CD4-positive, alpha-beta T cell (primary cell): ENCODE measurements at regions of chr12 and their contacts with region 1.

Region 1: DNA sequence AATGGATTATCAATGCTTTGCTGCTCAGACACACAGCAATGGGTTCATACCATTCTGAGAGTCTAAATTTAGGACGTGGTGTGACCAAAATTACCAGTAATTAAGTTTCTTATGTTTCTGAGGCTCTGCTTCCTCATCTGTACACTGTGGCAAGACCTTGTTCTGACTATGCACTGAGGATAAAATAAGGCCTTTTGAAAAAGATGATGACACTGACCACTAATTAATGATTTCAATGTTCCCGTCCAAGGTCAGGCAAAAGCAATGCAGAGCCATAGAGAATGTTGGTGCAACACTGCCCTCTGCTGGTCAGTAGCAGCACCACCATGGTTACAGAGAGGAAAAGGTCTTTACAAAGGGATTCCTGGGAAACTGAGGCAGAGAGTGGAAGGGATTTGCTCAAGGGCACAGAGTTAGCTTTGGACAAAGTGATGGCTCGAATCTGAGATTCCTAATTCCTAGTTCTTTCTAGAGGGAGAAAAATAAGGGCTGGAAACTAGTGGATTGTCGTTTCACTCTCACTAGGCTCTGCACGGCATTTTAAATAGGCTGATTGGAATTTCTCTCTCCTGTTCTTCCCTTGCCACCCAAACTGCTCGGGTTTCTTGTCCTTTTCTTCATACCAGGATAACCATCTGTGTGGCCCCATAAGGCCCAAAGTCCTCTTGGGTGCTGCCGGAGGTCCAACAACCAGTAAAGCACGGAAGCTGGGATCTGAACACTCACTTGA is 22.3 kb upstream of the P2RX7 start:
- DNase-seq: peak; percentile 33 to 87 (median 58)
- ATAC-seq: peak; percentile 82
- H3K4me3 ChIP-seq: no peak overlapping the region
- H3K4me3 Mint-ChIP-seq: no peak overlapping the region
- H3K27ac ChIP-seq: no peak overlapping the region
- H3K27ac Mint-ChIP-seq: no peak overlapping the region
- H3K4me1 ChIP-seq: no peaks in the 10 kb centered on the region
- H3K4me1 Mint-ChIP-seq: no peaks in the 10 kb centered on the region
- H3K27me3 ChIP-seq: no peaks in the 10 kb centered on the region
- H3K27me3 Mint-ChIP-seq: no peaks in the 10 kb centered on the region
- CTCF ChIP-seq: peak; percentile 99

Region 2: DNA sequence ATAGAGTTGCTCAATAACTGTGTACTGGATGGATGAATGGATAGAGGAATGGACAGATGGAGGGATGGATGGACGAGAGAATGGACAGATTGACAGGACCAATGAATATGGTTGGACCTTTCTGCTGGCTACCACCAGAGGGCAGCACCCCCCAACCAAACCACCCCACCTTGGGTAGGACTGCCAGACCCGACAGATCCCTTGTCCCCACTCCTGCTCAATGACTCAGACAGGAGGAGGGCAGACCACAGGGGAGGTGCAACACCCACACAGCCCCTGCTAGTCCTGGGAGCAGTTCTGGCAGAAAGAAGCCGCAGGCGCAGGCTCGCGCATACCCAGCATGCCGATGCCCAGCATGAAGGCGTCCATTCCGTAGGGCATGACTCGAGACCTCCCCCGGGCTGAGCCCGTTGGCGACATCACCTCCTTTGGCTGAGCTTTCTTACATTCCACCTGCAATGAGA is 753.8 kb before region 1 on chr12:
- CTCF ChIA-PET with region 1: no interaction called
- POLR2A ChIA-PET with region 1: no interaction called
- intact Hi-C with region 1: loop called in 1 of 2 experiments (anchors 5 kb)
- DNase-seq: peak; percentile 56 to 81 (median 65)
- ATAC-seq: peak; percentile 88
- H3K4me3 ChIP-seq: no peak overlapping the region
- H3K4me3 Mint-ChIP-seq: no peak overlapping the region
- H3K27ac ChIP-seq: no peak overlapping the region
- H3K27ac Mint-ChIP-seq: no peak overlapping the region
- H3K4me1 ChIP-seq: peaks cover 5% of the 10 kb centered on the region
- H3K4me1 Mint-ChIP-seq: no peaks in the 10 kb centered on the region
- H3K27me3 ChIP-seq: peaks cover 18 to 28% of the 10 kb centered on the region in 2 experiments
- H3K27me3 Mint-ChIP-seq: peaks cover 54% of the 10 kb centered on the region
- CTCF ChIP-seq: peak; percentile 91

Region 3: GRCh38 chr12:120761519-120761934 is 348.8 kb before region 1 on chr12:
- CTCF ChIA-PET with region 1: no interaction called
- POLR2A ChIA-PET with region 1: no interaction called
- intact Hi-C with region 1: loop called in 1 of 2 experiments (anchors 10 kb)
- DNase-seq: no peak
- ATAC-seq: peak; percentile 33
- H3K4me3 ChIP-seq: no peak overlapping the region
- H3K4me3 Mint-ChIP-seq: no peak overlapping the region
- H3K27ac ChIP-seq: peak overlapping the region; percentile 4 to 47
- H3K27ac Mint-ChIP-seq: peak overlapping the region; percentile 92
- H3K4me1 ChIP-seq: peaks cover 25% of the 10 kb centered on the region
- H3K4me1 Mint-ChIP-seq: peaks cover 31% of the 10 kb centered on the region
- H3K27me3 ChIP-seq: no peaks in the 10 kb centered on the region
- H3K27me3 Mint-ChIP-seq: no peaks in the 10 kb centered on the region
- CTCF ChIP-seq: no peak

Region 4: GRCh38 chr12:120944645-120945231 is 165.6 kb before region 1 on chr12:
- CTCF ChIA-PET with region 1: interaction called, 3 read pairs
- POLR2A ChIA-PET with region 1: no interaction called
- intact Hi-C with region 1: loop called (anchors 1 to 2 kb)
- DNase-seq: peak; percentile 32 to 80 (median 58)
- ATAC-seq: peak; percentile 71
- H3K4me3 ChIP-seq: no peak overlapping the region
- H3K4me3 Mint-ChIP-seq: no peak overlapping the region
- H3K27ac ChIP-seq: no peak overlapping the region
- H3K27ac Mint-ChIP-seq: no peak overlapping the region
- H3K4me1 ChIP-seq: no peaks in the 10 kb centered on the region
- H3K4me1 Mint-ChIP-seq: peaks cover 5% of the 10 kb centered on the region
- H3K27me3 ChIP-seq: no peaks in the 10 kb centered on the region
- H3K27me3 Mint-ChIP-seq: peaks cover under 1% of the 10 kb centered on the region
- CTCF ChIP-seq: peak; percentile 68

Region 5: DNA sequence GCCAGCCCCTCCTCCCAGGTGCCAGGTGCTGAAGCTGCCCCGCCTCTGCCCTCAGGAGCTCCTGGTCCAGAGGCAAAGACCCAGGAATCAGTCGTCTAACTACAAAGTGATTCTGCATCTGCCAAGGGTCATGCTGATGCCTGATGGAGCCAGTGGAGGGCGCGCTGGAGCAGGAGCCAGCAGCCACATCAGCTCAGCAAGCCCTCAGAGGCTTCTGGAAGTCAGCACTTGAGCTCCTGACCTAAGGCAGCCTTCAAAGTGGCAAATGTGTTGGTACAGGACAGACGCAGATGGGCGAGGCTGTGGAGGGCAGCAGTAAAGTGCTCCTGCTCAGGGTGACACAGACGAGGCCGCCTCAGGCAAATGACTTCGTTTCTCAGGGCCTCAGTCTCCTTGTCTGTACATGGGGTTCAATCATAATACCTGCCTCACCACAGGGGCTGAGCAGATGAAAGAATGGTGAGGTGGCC is 105.0 kb before region 1 on chr12:
- CTCF ChIA-PET with region 1: no interaction called
- POLR2A ChIA-PET with region 1: no interaction called
- intact Hi-C with region 1: loop called in 1 of 2 experiments (anchors 5 kb)
- DNase-seq: peak in 12 of 14 experiments; percentile 12 to 64 (median 32)
- ATAC-seq: peak; percentile 66
- H3K4me3 ChIP-seq: no peak overlapping the region
- H3K4me3 Mint-ChIP-seq: no peak overlapping the region
- H3K27ac ChIP-seq: no peak overlapping the region
- H3K27ac Mint-ChIP-seq: no peak overlapping the region
- H3K4me1 ChIP-seq: no peaks in the 10 kb centered on the region
- H3K4me1 Mint-ChIP-seq: no peaks in the 10 kb centered on the region
- H3K27me3 ChIP-seq: no peaks in the 10 kb centered on the region
- H3K27me3 Mint-ChIP-seq: no peaks in the 10 kb centered on the region
- CTCF ChIP-seq: peak; percentile 27

Region 6: DNA sequence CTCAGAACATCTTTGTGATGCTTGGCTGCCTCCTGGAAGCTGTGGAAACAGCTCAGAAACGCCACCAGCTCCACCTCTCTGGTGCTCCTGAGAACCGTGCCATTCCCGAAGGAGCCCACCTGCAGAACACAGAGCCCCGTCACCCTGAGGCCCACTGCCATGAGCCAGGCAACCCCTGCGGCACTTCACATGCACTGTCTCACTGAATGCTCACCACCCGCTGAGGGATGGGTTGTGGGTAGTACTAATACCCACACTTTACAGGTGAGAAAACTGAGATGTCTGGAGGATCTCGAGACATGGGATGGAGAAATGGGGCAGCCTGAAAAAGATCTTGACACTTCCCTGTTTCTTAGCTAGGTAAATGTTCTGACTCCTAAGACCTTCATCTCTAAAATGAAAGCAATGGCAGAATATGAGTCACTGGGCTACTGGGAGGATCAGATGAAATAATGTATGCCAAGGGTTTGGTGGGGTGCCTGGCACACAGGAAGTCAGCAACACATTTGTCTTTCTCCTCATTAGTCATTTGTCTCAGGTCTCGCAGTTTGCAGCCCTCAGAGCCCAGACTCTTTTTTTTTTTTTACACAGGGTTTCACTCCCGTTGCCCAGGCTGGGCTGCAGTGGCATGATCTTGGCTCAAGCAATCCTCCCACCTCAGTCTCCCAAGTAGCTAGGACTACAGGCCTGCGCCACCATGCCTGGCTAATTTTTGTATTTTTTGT is 76.6 kb before region 1 on chr12:
- CTCF ChIA-PET with region 1: no interaction called
- POLR2A ChIA-PET with region 1: no interaction called
- intact Hi-C with region 1: no loop called
- DNase-seq: peak in 13 of 14 experiments; percentile 31 to 88 (median 55)
- ATAC-seq: peak; percentile 75
- H3K4me3 ChIP-seq: peak overlapping the region; percentile 17
- H3K4me3 Mint-ChIP-seq: peak overlapping the region; percentile 75
- H3K27ac ChIP-seq: peak overlapping the region; percentile 42 to 73
- H3K27ac Mint-ChIP-seq: peak overlapping the region; percentile 89
- H3K4me1 ChIP-seq: peaks cover 63% of the 10 kb centered on the region
- H3K4me1 Mint-ChIP-seq: peaks cover 46% of the 10 kb centered on the region
- H3K27me3 ChIP-seq: no peaks in the 10 kb centered on the region
- H3K27me3 Mint-ChIP-seq: no peaks in the 10 kb centered on the region
- CTCF ChIP-seq: no peak

Region 7: DNA sequence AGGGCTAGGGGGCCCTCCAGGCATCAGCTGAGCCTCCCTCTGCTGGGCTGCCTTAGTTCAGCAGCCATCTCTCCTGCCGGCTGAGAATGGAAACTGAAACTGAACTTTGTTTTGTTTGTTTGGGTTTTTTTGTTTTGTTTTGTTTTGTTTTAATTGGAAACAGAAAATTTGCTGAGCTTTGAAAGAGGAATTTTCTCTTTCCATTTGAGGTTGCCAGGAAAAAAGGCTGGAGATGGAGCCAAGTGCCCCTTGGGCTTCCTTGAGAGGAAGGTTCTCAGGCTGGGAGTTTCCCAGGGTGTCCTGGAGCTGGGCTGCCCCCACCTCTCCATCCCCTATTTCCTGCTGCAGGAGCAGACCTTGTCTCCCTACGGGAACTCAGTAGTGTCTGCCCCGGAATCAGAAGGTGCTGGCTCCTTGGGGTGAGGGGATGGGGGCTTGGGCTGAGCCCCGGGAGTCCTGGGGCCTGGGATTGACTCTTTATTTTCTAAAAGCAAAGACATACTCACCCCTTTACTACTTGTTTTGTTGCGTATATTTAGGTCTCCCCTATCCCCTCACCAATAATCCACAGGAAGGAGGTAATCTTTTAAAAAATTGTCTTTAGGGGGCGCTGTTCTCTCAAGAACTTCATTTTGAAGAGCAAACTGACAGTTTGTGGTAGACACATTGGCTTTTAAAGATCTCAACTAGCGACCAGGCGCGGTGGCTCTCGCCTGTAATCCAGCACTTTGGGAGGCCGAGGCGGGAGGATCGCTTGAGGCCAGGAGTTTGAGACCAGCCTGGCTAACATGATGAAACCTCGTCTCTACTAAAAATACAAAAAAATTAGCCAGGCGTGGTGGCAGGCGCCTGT is 50.0 kb before region 1 on chr12:
- CTCF ChIA-PET with region 1: no interaction called
- POLR2A ChIA-PET with region 1: interaction called, 3 read pairs
- intact Hi-C with region 1: loop called (anchors 1 to 5 kb)
- DNase-seq: peak; percentile 44 to 85 (median 57)
- ATAC-seq: peak; percentile 94
- H3K4me3 ChIP-seq: peak overlapping the region; percentile 59
- H3K4me3 Mint-ChIP-seq: peak overlapping the region; percentile 84
- H3K27ac ChIP-seq: peak overlapping the region; percentile 63 to 79
- H3K27ac Mint-ChIP-seq: peak overlapping the region; percentile 88
- H3K4me1 ChIP-seq: peaks cover 15% of the 10 kb centered on the region
- H3K4me1 Mint-ChIP-seq: peaks cover 15% of the 10 kb centered on the region
- H3K27me3 ChIP-seq: no peaks in the 10 kb centered on the region
- H3K27me3 Mint-ChIP-seq: no peaks in the 10 kb centered on the region
- CTCF ChIP-seq: peak; percentile 70

Region 8: GRCh38 chr12:121223292-121224285 is 113.2 kb after region 1 on chr12:
- CTCF ChIA-PET with region 1: no interaction called
- POLR2A ChIA-PET with region 1: no interaction called
- intact Hi-C with region 1: loop called in 1 of 2 experiments (anchors 10 kb)
- DNase-seq: peak in 10 of 14 experiments; percentile 23 to 72 (median 46)
- ATAC-seq: peak; percentile 53
- H3K4me3 ChIP-seq: no peak overlapping the region
- H3K4me3 Mint-ChIP-seq: peak overlapping the region; percentile 55
- H3K27ac ChIP-seq: peak overlapping the region; percentile 48 to 79
- H3K27ac Mint-ChIP-seq: peak overlapping the region; percentile 88
- H3K4me1 ChIP-seq: peaks cover 58% of the 10 kb centered on the region
- H3K4me1 Mint-ChIP-seq: peaks cover 47% of the 10 kb centered on the region
- H3K27me3 ChIP-seq: no peaks in the 10 kb centered on the region
- H3K27me3 Mint-ChIP-seq: no peaks in the 10 kb centered on the region
- CTCF ChIP-seq: no peak

Region 9: DNA sequence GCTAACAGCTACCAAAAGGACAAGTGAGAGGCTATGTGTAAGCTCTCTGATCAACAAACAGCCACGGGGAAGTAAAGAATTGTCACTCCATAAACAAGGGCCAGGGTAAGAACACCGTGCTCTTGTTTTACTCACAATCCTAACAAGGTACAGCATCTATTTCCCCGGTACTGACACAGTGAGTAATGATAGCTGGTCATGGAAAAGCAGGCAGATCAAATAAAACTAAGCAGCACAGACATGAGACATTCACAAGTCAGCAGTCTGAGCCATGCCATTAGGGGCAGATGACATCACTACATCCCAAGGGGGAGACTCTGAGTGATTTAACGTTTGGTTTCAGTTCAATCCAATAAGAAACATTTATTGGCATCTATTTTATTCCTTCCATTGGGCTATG is 1924.5 kb after region 1 on chr12:
- CTCF ChIA-PET with region 1: no interaction called
- POLR2A ChIA-PET with region 1: no interaction called
- intact Hi-C with region 1: no loop called
- DNase-seq: peak in 1 of 14 experiments; percentile 24
- ATAC-seq: peak; percentile 77
- H3K4me3 ChIP-seq: no peak overlapping the region
- H3K4me3 Mint-ChIP-seq: no peak overlapping the region
- H3K27ac ChIP-seq: no peak overlapping the region
- H3K27ac Mint-ChIP-seq: peak overlapping the region; percentile 67
- H3K4me1 ChIP-seq: peaks cover 18% of the 10 kb centered on the region
- H3K4me1 Mint-ChIP-seq: peaks cover 36% of the 10 kb centered on the region
- H3K27me3 ChIP-seq: no peaks in the 10 kb centered on the region
- H3K27me3 Mint-ChIP-seq: no peaks in the 10 kb centered on the region
- CTCF ChIP-seq: no peak